ENCODE measurements at regions of chr12 and their contacts with region 1.

Region 1: DNA sequence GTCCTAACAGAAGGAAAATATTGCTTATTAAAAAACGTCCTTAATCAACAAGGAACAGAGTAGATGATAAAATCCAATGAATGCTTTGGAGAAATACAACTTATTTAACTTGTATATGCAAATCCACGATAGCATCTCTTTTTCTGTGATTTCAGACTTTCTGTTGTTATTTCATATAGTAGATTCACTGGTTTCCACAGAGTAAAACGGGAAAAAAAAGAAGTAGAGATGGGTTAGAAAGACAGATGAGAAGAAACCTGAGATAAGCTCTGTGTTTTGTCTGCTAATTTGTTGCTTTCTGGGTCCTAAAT is 447.7 kb downstream of the RERGL start:
- DNase-seq: no peak
- ATAC-seq: no peak
- H3K4me3 Mint-ChIP-seq: no peak overlapping the region
- H3K27ac Mint-ChIP-seq: no peak overlapping the region
- H3K4me1 Mint-ChIP-seq: peaks cover 4% of the 10 kb centered on the region
- H3K27me3 Mint-ChIP-seq: no peaks in the 10 kb centered on the region
- CTCF ChIP-seq: no peak

Region 2: GRCh38 chr12:16076553-16076952 is 1565.7 kb before region 1 on chr12:
- CTCF ChIA-PET with region 1: interaction called, 3 read pairs
- POLR2A ChIA-PET with region 1: no interaction called
- intact Hi-C with region 1: loop called (anchors 2 kb)
- DNase-seq: no peak
- ATAC-seq: no peak
- H3K4me3 Mint-ChIP-seq: no peak overlapping the region
- H3K27ac Mint-ChIP-seq: no peak overlapping the region
- H3K4me1 Mint-ChIP-seq: no peaks in the 10 kb centered on the region
- H3K27me3 Mint-ChIP-seq: no peaks in the 10 kb centered on the region
- CTCF ChIP-seq: no peak

Region 3: GRCh38 chr12:17550011-17550410 is 92.3 kb before region 1 on chr12:
- CTCF ChIA-PET with region 1: no interaction called
- POLR2A ChIA-PET with region 1: no interaction called
- intact Hi-C with region 1: no loop called
- DNase-seq: no peak
- ATAC-seq: no peak
- H3K4me3 Mint-ChIP-seq: no peak overlapping the region
- H3K27ac Mint-ChIP-seq: no peak overlapping the region
- H3K4me1 Mint-ChIP-seq: no peaks in the 10 kb centered on the region
- H3K27me3 Mint-ChIP-seq: no peaks in the 10 kb centered on the region
- CTCF ChIP-seq: no peak